GM12878 (cell line): ENCODE measurements at regions of chr6 and their contacts with region 1.

Region 1: DNA sequence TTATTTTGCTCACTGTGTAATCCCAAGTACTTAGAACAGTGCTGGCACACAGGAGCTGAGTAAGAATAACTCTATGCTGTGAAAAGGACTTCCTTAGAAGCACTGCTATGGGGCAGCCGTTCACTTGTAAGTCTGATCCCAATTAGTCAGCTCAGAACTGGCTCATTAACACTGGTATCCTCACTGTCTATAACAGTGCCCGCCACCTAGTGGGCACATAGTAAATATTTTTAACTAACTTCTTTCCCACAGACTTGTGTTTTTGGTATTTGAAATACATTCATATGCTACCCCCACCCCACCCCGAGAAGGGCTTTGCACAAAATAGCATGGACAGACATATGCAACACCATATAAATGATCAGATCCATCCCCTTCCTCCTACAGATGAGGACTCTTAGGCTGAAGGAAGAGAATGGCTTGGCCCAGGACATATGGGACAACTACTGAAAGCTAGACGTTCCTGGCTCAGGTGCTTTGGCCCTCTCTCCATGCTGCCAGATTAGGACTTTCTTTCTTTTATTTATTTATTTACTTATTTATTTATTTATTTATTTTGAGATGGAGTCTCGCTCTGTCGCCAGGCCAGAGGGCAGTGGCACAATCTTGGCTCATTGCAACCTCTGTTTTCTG is 47.1 kb downstream of the DST start:
- DNase-seq: peak; percentile 31
- ATAC-seq: peak; percentile 70
- H3K4me3 ChIP-seq: no peak overlapping the region
- H3K27ac ChIP-seq: peak overlapping the region; percentile 62
- H3K4me1 ChIP-seq: peaks cover 25% of the 10 kb centered on the region
- H3K27me3 ChIP-seq: no peaks in the 10 kb centered on the region
- CTCF ChIP-seq: peak; percentile 62 to 70 (median 68)
- EP300 ChIP-seq: no peak
- POLR2A ChIP-seq: no peak
- RAD21 ChIP-seq: peak; percentile 28

Region 2: GRCh38 chr6:56314683-56315523 is 280.7 kb before region 1 on chr6:
- CTCF ChIA-PET with region 1: interaction called, 34 read pairs
- POLR2A ChIA-PET with region 1: no interaction called
- RAD21 ChIA-PET with region 1: interaction called, 6 read pairs
- SMC1A ChIA-PET with region 1: interaction called, 9 read pairs
- in situ Hi-C with region 1: no loop called
- intact Hi-C with region 1: loop called (anchors 2 kb)
- DNase-seq: no peak
- ATAC-seq: peak; percentile 67
- H3K4me3 ChIP-seq: no peak overlapping the region
- H3K27ac ChIP-seq: no peak overlapping the region
- H3K4me1 ChIP-seq: no peaks in the 10 kb centered on the region
- H3K27me3 ChIP-seq: 0 out of 4 replicates have a peak, but pooled peaks cover 0 to 3% of the 10 kb centered on the region in 2 experiments
- CTCF ChIP-seq: peak; percentile 64 to 73 (median 65)
- EP300 ChIP-seq: no peak
- POLR2A ChIP-seq: no peak
- RAD21 ChIP-seq: peak; percentile 69

Region 3: GRCh38 chr6:56532766-56533551 is 62.6 kb before region 1 on chr6:
- CTCF ChIA-PET with region 1: interaction called, 84 read pairs
- POLR2A ChIA-PET with region 1: no interaction called
- RAD21 ChIA-PET with region 1: interaction called, 4 read pairs
- SMC1A ChIA-PET with region 1: interaction called, 15 read pairs
- in situ Hi-C with region 1: no loop called
- intact Hi-C with region 1: no loop called
- DNase-seq: no peak
- ATAC-seq: peak; percentile 86
- H3K4me3 ChIP-seq: no peak overlapping the region
- H3K27ac ChIP-seq: no peak overlapping the region
- H3K4me1 ChIP-seq: no peaks in the 10 kb centered on the region
- H3K27me3 ChIP-seq: no peaks in the 10 kb centered on the region
- CTCF ChIP-seq: no peak
- EP300 ChIP-seq: no peak
- POLR2A ChIP-seq: no peak
- RAD21 ChIP-seq: no peak

Region 4: GRCh38 chr6:56575736-56576135 is 19.9 kb before region 1 on chr6:
- CTCF ChIA-PET with region 1: interaction called, 39 read pairs
- POLR2A ChIA-PET with region 1: interaction called, 5 read pairs
- RAD21 ChIA-PET with region 1: interaction called, 22 read pairs
- SMC1A ChIA-PET with region 1: interaction called, 16 read pairs
- in situ Hi-C with region 1: no loop called
- intact Hi-C with region 1: no loop called
- DNase-seq: no peak
- ATAC-seq: no peak
- H3K4me3 ChIP-seq: no peak overlapping the region
- H3K27ac ChIP-seq: no peak overlapping the region
- H3K4me1 ChIP-seq: no peaks in the 10 kb centered on the region
- H3K27me3 ChIP-seq: no peaks in the 10 kb centered on the region
- CTCF ChIP-seq: no peak
- EP300 ChIP-seq: no peak
- POLR2A ChIP-seq: no peak
- RAD21 ChIP-seq: no peak

Region 5: GRCh38 chr6:56660381-56660730 is 64.8 kb after region 1 on chr6:
- CTCF ChIA-PET with region 1: no interaction called
- POLR2A ChIA-PET with region 1: no interaction called
- RAD21 ChIA-PET with region 1: no interaction called
- SMC1A ChIA-PET with region 1: no interaction called
- in situ Hi-C with region 1: no loop called
- intact Hi-C with region 1: no loop called
- DNase-seq: no peak
- ATAC-seq: no peak; the same call in 2 of the 3 replicates
- H3K4me3 ChIP-seq: no peak overlapping the region
- H3K27ac ChIP-seq: peak overlapping the region; percentile 69
- H3K4me1 ChIP-seq: peaks cover 22% of the 10 kb centered on the region
- H3K27me3 ChIP-seq: no peaks in the 10 kb centered on the region
- CTCF ChIP-seq: no peak
- EP300 ChIP-seq: no peak
- POLR2A ChIP-seq: no peak
- RAD21 ChIP-seq: no peak

Region 6: DNA sequence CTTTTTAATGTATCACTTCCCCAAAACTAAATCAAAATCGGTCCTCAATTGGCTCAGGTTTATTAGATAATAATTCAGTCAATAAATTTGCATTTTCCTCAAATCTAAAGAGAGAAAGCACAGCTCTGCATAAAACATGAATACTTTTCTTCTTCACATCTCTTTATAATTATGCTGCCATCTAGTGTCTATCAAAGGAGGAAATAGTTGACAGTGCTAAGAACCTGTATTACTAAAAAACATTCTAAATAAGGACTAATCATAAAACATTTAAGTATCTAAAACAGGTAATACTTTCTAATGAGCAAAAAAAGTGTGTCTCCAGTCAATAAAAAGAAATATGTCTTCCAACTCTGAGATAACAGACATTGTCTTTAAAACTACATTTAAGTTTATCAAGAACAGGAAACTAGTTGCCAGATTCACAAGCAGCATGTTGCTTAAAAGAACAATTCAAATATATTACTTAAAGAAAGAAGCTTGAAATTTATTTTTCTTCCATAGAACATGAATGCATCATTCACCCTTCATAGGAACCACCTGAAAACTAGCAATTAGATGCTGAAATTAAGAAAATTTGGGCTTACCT is 103.6 kb after region 1 on chr6:
- CTCF ChIA-PET with region 1: interaction called, 11 read pairs
- POLR2A ChIA-PET with region 1: no interaction called
- RAD21 ChIA-PET with region 1: interaction called, 6 read pairs
- SMC1A ChIA-PET with region 1: interaction called, 8 read pairs
- in situ Hi-C with region 1: no loop called
- intact Hi-C with region 1: no loop called
- DNase-seq: no peak
- ATAC-seq: peak; percentile 69
- H3K4me3 ChIP-seq: no peak overlapping the region
- H3K27ac ChIP-seq: no peak overlapping the region
- H3K4me1 ChIP-seq: no peaks in the 10 kb centered on the region
- H3K27me3 ChIP-seq: no peaks in the 10 kb centered on the region
- CTCF ChIP-seq: peak; percentile 26 to 43 (median 26); a peak in 3 of 6 replicates
- EP300 ChIP-seq: no peak
- POLR2A ChIP-seq: no peak
- RAD21 ChIP-seq: peak; percentile 45; the same call in 1 of the 2 replicates

Region 7: GRCh38 chr6:56851541-56852259 is 256.1 kb after region 1 on chr6:
- CTCF ChIA-PET with region 1: interaction called, 44 read pairs
- POLR2A ChIA-PET with region 1: interaction called, 3 read pairs
- RAD21 ChIA-PET with region 1: interaction called, 18 read pairs
- SMC1A ChIA-PET with region 1: interaction called, 21 read pairs
- in situ Hi-C with region 1: no loop called
- intact Hi-C with region 1: no loop called
- DNase-seq: peak; percentile 89
- ATAC-seq: peak; percentile 89
- H3K4me3 ChIP-seq: peak overlapping the region; percentile 100
- H3K27ac ChIP-seq: peak overlapping the region; percentile 82
- H3K4me1 ChIP-seq: peaks cover 26% of the 10 kb centered on the region
- H3K27me3 ChIP-seq: no peaks in the 10 kb centered on the region
- CTCF ChIP-seq: peak; percentile 57 to 84 (median 78)
- EP300 ChIP-seq: peak in 1 of 2 experiments; percentile 68; a peak in 2 of 4 replicates
- POLR2A ChIP-seq: no peak
- RAD21 ChIP-seq: peak; percentile 90